ENCODE measurements at regions of chr5 and their contacts with region 1.

Region 1: DNA sequence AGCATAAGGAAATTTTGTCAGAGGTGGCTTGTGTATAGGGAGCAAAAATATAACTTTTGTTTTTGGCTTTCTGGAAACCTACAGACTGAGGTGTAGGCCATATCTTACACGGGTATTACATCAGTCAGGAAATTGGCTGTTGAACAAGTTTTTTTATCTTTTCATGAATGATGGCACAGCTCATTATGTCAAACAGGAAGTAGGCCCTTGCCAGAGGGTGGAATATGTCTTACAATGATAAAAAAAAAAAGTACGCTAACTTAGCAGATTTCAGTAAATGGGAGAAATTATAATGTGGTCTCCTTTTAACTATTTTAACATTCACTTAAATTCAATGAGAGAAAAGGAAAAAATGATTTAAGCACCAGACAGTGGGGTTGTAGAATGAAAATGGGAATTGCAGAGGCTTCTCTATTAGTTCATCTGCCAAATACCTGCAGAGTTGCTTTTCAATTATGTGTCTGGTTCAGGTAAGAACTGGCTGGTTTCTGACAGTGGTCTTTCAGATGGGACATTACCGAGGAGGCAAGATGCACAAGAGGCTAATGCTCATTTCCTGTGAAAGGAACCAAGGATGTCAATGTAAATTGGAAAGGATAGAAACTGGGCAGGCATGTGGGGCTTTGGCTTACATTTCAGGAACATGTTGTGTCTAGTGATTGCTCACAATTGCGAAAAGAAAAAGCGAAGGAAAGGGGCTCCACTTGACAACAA is 169.9 kb downstream of the NNT start:
- DNase-seq: no peak
- H3K4me3 Mint-ChIP-seq: no peak overlapping the region
- H3K27ac Mint-ChIP-seq: peak overlapping the region; percentile 82
- H3K4me1 Mint-ChIP-seq: peaks cover 21% of the 10 kb centered on the region
- H3K27me3 Mint-ChIP-seq: no peaks in the 10 kb centered on the region

Region 2: GRCh38 chr5:43075319-43076293 is 697.3 kb before region 1 on chr5:
- CTCF ChIA-PET with region 1: no interaction called
- intact Hi-C with region 1: no loop called
- DNase-seq: no peak
- H3K4me3 Mint-ChIP-seq: no peak overlapping the region
- H3K27ac Mint-ChIP-seq: peak overlapping the region; percentile 42
- H3K4me1 Mint-ChIP-seq: peaks cover 27% of the 10 kb centered on the region
- H3K27me3 Mint-ChIP-seq: no peaks in the 10 kb centered on the region

Region 3: DNA sequence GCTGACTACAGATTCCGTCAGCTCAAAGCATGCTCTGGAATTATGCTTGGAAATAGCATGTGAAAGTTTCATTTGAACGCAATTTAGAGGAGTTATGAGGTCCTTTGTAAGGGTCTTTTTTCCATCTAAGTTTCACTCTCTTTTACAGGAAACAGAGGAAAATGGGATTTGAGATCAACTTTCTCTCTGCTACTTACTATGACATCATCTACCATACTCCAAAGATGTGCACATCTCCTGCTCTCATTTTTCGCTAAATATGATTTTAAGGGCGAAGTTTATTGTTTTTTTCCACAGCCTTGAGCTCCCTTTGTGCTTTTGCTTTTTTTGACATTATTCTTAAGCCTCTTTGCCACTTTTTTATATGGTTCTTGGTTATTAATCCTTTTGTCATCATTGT is 44.4 kb before region 1 on chr5:
- CTCF ChIA-PET with region 1: no interaction called
- intact Hi-C with region 1: no loop called
- DNase-seq: no peak
- H3K4me3 Mint-ChIP-seq: no peak overlapping the region
- H3K27ac Mint-ChIP-seq: no peak overlapping the region
- H3K4me1 Mint-ChIP-seq: no peaks in the 10 kb centered on the region
- H3K27me3 Mint-ChIP-seq: no peaks in the 10 kb centered on the region

Region 4: GRCh38 chr5:44808435-44809214 is 1035.7 kb after region 1 on chr5 and contains the start of gene MRPS30:
- CTCF ChIA-PET with region 1: no interaction called
- intact Hi-C with region 1: loop called (anchors 2 kb)
- DNase-seq: peak; percentile 96
- H3K4me3 Mint-ChIP-seq: peak within 1 kb of the TSS; percentile 96
- H3K27ac Mint-ChIP-seq: peak within 1 kb of the TSS; percentile 95
- H3K4me1 Mint-ChIP-seq: peaks cover 16% of the 10 kb centered on the region
- H3K27me3 Mint-ChIP-seq: peaks cover 1% of the 10 kb centered on the region
- total RNA-seq, gene MRPS30: 46.1 to 49.3 TPM

Region 5: GRCh38 chr5:44875661-44876605 is 1103.0 kb after region 1 on chr5:
- CTCF ChIA-PET with region 1: no interaction called
- intact Hi-C with region 1: loop called (anchors 1 kb)
- DNase-seq: peak; percentile 52
- H3K4me3 Mint-ChIP-seq: no peak overlapping the region
- H3K27ac Mint-ChIP-seq: peak overlapping the region; percentile 84
- H3K4me1 Mint-ChIP-seq: peaks cover 25% of the 10 kb centered on the region
- H3K27me3 Mint-ChIP-seq: no peaks in the 10 kb centered on the region